GM12878 (cell line): ENCODE measurements at regions of chr2 and their contacts with region 1.

Region 1: DNA sequence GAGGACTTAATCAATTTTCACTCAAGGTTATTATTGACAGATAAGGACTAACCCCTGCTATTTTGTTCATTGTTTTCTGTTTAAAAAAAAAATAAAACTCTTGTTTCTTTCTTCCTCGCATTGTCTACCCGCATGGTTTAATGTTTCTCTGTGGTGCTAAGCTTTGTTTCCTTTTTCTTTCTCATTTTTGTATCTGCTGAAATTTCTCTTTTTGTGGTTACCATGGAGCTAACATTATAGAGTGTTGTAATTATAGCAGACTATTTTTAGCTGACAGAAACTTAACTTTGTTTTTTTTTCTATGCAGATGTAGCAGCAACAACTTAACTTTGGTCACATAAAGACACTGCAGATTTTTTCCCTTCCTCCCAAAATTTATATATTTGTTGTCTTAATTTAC is 43.1 kb upstream of the CHN1 start:
- DNase-seq: no peak
- ATAC-seq: 0 out of 3 replicates have a peak, but pooled peaks have one; percentile 27
- H3K4me3 ChIP-seq: no peak overlapping the region
- H3K27ac ChIP-seq: no peak overlapping the region
- H3K4me1 ChIP-seq: no peaks in the 10 kb centered on the region
- H3K27me3 ChIP-seq: no peaks in the 10 kb centered on the region
- CTCF ChIP-seq: no peak
- EP300 ChIP-seq: no peak
- POLR2A ChIP-seq: no peak
- RAD21 ChIP-seq: no peak

Region 2: DNA sequence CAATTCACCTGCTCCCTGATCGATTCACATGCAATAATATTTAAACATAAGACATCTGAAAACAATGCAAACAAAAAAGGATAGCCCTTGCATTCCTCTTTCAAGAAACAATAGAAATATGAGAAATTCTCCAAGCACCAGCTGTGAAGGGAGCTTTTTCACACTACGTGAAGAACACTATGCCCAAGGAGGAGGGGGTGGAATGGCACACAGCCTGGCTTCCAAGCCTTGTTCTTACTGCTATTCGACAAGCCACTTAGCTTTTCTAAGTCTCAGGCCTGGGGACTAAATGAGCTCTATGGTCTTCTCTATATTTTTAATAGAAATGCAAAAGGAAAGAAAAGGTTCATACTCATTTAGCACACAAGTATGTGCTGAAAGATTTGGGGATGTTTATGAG is 191.8 kb before region 1 on chr2:
- CTCF ChIA-PET with region 1: no interaction called
- POLR2A ChIA-PET with region 1: no interaction called
- RAD21 ChIA-PET with region 1: no interaction called
- SMC1A ChIA-PET with region 1: no interaction called
- in situ Hi-C with region 1: no loop called
- intact Hi-C with region 1: no loop called
- DNase-seq: no peak
- ATAC-seq: no peak
- H3K4me3 ChIP-seq: no peak overlapping the region
- H3K27ac ChIP-seq: no peak overlapping the region
- H3K4me1 ChIP-seq: no peaks in the 10 kb centered on the region
- H3K27me3 ChIP-seq: no peaks in the 10 kb centered on the region
- CTCF ChIP-seq: no peak
- EP300 ChIP-seq: no peak
- POLR2A ChIP-seq: no peak
- RAD21 ChIP-seq: no peak

Region 3: DNA sequence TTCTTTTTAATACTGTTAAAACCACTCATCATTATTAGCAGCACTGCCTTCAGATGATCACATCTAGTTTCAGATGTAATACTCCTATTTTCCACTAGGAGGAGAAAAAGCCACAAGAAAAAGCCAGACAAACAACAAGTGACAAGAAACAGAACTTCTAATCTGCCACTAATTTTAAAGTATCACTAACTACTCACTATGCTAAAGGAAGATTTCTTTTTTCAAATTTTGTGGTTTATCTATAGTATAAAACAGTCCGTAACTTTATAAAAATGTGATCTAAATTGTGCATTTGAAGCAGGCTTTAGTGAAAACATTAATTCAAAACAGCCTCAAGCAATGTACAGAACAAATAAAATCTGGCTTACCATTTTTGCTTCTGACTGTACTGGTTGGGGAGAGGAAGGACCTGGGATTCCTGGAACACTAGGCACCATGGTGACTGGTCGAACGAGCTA is 63.0 kb after region 1 on chr2:
- CTCF ChIA-PET with region 1: no interaction called
- POLR2A ChIA-PET with region 1: no interaction called
- RAD21 ChIA-PET with region 1: no interaction called
- SMC1A ChIA-PET with region 1: interaction called, 11 read pairs
- in situ Hi-C with region 1: no loop called
- intact Hi-C with region 1: no loop called
- DNase-seq: peak; percentile 7
- ATAC-seq: peak; percentile 83
- H3K4me3 ChIP-seq: no peak overlapping the region
- H3K27ac ChIP-seq: no peak overlapping the region
- H3K4me1 ChIP-seq: no peaks in the 10 kb centered on the region
- H3K27me3 ChIP-seq: no peaks in the 10 kb centered on the region
- CTCF ChIP-seq: peak; percentile 62 to 69 (median 67)
- EP300 ChIP-seq: no peak
- POLR2A ChIP-seq: no peak
- RAD21 ChIP-seq: peak; percentile 81